ENCODE measurements at regions of chr3 and their contacts with region 1.

Region 1: GRCh38 chr3:43180027-43180426 is 74.1 kb upstream of the POMGNT2 start:
- DNase-seq: peak in 1 of 2 donors; percentile 32
- ATAC-seq: peak in 7 of 8 donors; percentile 55 to 87 (median 76)
- H3K4me3 ChIP-seq: no peak overlapping the region
- H3K27ac ChIP-seq: peak overlapping the region in 9 of 10 donors; percentile 27 to 79 (median 62)
- H3K4me1 ChIP-seq: peaks cover 3 to 57% (median 36%) of the 10 kb centered on the region in 9 donors
- H3K27me3 ChIP-seq: no peaks in the 10 kb centered on the region
- CTCF ChIP-seq: no peak

Region 2: DNA sequence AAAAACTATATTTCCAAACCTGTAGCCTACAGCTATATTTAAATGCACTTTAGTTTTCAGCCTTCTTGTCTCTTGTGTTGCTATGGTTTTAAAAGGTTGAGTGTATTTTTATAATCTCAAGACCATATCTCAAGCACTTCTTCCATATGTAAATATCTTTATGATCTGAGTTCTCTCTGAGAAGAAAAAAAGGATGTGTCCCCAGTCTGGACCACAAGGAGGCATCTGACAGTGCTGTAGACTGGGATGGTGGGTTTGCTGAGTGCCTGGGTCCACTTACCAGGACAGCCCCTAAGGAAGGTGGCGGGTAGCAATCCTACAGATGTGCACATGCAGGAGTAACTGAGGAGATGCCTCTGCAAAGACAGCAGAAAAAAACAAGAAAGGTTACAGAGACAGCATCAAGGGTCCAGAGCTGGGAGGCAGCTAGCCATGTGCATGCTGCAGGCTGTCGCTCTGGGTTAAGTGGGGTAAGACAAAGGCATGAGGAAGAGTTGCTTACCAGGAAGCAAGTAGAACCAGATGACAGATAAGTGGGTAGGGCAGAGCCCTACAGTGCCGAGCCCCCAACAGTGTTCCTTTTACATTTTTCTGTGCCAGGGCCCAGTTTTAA is 35.7 kb after region 1 on chr3:
- intact Hi-C with region 1: loop called in 1 of 10 experiments (anchors 5 kb)
- DNase-seq: no peak
- ATAC-seq: no peak
- H3K4me3 ChIP-seq: no peak overlapping the region
- H3K27ac ChIP-seq: no peak overlapping the region
- H3K4me1 ChIP-seq: peaks cover 0 to 24% (median 11%) of the 10 kb centered on the region in 9 donors
- H3K27me3 ChIP-seq: no peaks in the 10 kb centered on the region
- CTCF ChIP-seq: peak in 2 of 9 donors; percentile 15 to 17

Region 3: GRCh38 chr3:43363621-43364266 is 183.7 kb after region 1 on chr3:
- intact Hi-C with region 1: loop called in 1 of 10 experiments (anchors 10 kb)
- DNase-seq: peak; percentile 75 to 76
- ATAC-seq: peak; percentile 60 to 79 (median 66)
- H3K4me3 ChIP-seq: no peak overlapping the region
- H3K27ac ChIP-seq: peak overlapping the region in 9 of 10 donors; percentile 24 to 79 (median 61)
- H3K4me1 ChIP-seq: peaks cover 3 to 45% (median 15%) of the 10 kb centered on the region in 9 donors
- H3K27me3 ChIP-seq: no peaks in the 10 kb centered on the region
- CTCF ChIP-seq: no peak

Region 4: GRCh38 chr3:43378066-43378935 is 198.3 kb after region 1 on chr3:
- intact Hi-C with region 1: loop called in 2 of 10 experiments (anchors 10 kb)
- DNase-seq: no peak
- ATAC-seq: peak in 5 of 8 donors; percentile 25 to 48 (median 44)
- H3K4me3 ChIP-seq: no peak overlapping the region
- H3K27ac ChIP-seq: peak overlapping the region in 4 of 10 donors; percentile 2 to 47 (median 20)
- H3K4me1 ChIP-seq: peaks cover 0 to 26% (median 16%) of the 10 kb centered on the region in 9 donors
- H3K27me3 ChIP-seq: no peaks in the 10 kb centered on the region
- CTCF ChIP-seq: peak; percentile 21 to 69 (median 57)

Region 5: DNA sequence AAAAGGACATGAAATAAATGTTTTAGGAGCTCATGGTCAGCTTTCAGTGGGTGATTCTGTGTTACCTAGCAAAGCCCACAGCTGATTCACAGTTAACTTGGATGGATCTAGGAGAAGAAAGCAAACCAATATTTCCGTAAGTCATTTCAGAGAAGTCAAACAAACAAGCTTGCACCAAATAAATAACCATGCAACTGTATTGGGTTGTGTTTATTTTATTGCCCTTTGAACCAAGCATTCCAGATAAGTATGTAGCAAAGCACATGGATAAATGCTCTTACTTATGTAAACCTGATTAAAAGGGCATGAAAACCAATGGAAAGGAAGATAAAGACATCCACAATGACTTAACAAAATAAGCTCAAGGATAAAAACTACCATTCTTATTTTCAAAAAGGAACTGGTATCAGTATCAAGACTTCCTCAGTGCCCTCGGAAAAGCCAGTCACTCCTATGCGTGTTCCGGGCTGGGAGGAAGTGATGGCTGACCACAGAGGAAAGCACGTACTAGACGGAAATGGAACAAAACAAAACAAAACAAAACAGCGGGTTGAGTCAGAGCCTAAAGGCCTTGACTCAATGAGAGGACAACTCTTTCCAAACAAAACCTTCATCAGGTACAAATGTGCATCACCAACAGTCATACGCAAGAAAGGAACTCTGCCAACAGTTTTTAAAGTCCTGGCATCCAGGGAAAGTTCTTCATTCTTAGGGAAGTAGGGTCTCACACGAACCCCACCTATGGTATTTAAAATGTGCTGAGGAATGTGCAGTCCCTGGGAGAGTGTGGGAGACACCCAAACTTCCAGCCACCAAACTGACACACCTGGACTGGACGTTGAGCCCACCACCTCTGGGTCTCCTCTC is 209.6 kb after region 1 on chr3:
- intact Hi-C with region 1: loop called in 1 of 10 experiments (anchors 10 kb)
- DNase-seq: peak in 1 of 2 donors; percentile 69
- ATAC-seq: peak; percentile 65 to 85 (median 76)
- H3K4me3 ChIP-seq: no peak overlapping the region
- H3K27ac ChIP-seq: peak overlapping the region; percentile 31 to 93 (median 82)
- H3K4me1 ChIP-seq: peaks cover 3 to 60% (median 41%) of the 10 kb centered on the region in 9 donors
- H3K27me3 ChIP-seq: no peaks in the 10 kb centered on the region
- CTCF ChIP-seq: no peak

Region 6: GRCh38 chr3:44923632-44924456 is 1743.8 kb after region 1 on chr3:
- intact Hi-C with region 1: loop called in 1 of 10 experiments (anchors 5 kb)
- DNase-seq: no peak
- ATAC-seq: peak in 1 of 8 donors; percentile 36
- H3K4me3 ChIP-seq: no peak overlapping the region
- H3K27ac ChIP-seq: peak overlapping the region in 1 of 10 donors; percentile 9
- H3K4me1 ChIP-seq: peaks cover 0 to 17% (median 10%) of the 10 kb centered on the region in 9 donors
- H3K27me3 ChIP-seq: no peaks in the 10 kb centered on the region
- CTCF ChIP-seq: no peak

Measured in heart right ventricle (tissue), 16 donors.